CD8-positive, alpha-beta T cell (primary cell): ENCODE measurements at regions of chr16 and their contacts with region 1.

Region 1: DNA sequence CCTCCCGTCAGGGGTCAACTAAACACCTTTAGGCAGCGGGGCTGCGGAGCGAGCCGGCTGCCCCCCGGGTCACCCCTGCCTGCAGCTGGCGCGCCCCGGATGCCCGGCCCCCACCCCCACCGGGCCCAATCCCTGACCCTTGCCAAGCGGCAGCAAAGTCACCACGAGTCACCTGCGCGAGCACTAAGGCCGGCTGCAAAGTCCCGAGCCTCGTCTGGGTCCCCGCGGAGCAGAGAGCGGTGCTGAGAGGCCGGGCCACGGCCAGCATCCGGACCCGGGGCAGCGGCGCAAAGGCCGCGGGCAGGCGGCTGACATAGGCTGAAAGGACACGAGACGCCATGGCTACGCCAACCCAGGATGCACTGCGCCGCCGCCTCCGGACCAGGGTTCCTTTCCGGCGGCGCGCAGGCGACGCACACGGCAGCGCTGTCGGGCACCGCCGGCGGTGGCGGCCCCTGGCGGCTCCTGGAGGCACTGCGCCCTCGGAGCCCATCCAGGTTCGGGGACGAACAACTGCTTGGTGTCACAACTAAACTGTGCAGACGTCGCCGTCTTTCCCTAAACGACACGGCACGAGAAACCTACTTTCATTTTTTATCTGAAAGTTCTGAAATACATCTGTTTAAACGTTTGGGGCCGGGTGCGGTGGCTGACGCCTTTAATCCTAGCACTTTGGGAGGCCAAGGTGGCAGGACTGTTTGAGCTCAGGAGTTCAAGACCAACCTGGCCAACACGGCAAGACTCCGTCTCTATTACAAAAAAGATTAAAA is at the start of gene NDUFAB1:
- DNase-seq: peak; percentile 83 to 94 (median 90)
- ATAC-seq: peak; percentile 100
- H3K4me3 ChIP-seq: peak within 1 kb of the TSS; percentile 81 to 82
- H3K4me3 Mint-ChIP-seq: peak within 1 kb of the TSS; percentile 82
- H3K27ac ChIP-seq: peak within 1 kb of the TSS; percentile 67 to 77
- H3K27ac Mint-ChIP-seq: peak within 1 kb of the TSS; percentile 88
- H3K4me1 ChIP-seq: peaks cover 13% of the 10 kb centered on the region
- H3K4me1 Mint-ChIP-seq: peaks cover 41% of the 10 kb centered on the region
- H3K27me3 ChIP-seq: no peaks in the 10 kb centered on the region
- H3K27me3 Mint-ChIP-seq: no peaks in the 10 kb centered on the region
- CTCF ChIP-seq: peak; percentile 95
- total RNA-seq, gene NDUFAB1: 32.3 to 36.0 TPM

Region 2: GRCh38 chr16:23510164-23510914 is 85.8 kb before region 1 on chr16 and contains the start of gene GGA2:
- CTCF ChIA-PET with region 1: interaction called, 4 read pairs
- POLR2A ChIA-PET with region 1: no interaction called
- intact Hi-C with region 1: loop called (anchors 1 to 2 kb)
- DNase-seq: peak; percentile 56 to 89 (median 77)
- ATAC-seq: peak; percentile 81
- H3K4me3 ChIP-seq: peak within 1 kb of the TSS; percentile 63 to 73
- H3K4me3 Mint-ChIP-seq: peak within 1 kb of the TSS; percentile 92
- H3K27ac ChIP-seq: peak within 1 kb of the TSS; percentile 40 to 64
- H3K27ac Mint-ChIP-seq: peak within 1 kb of the TSS; percentile 88
- H3K4me1 ChIP-seq: peaks cover 42% of the 10 kb centered on the region
- H3K4me1 Mint-ChIP-seq: peaks cover 59% of the 10 kb centered on the region
- H3K27me3 ChIP-seq: no peaks in the 10 kb centered on the region
- H3K27me3 Mint-ChIP-seq: no peaks in the 10 kb centered on the region
- CTCF ChIP-seq: no peak
- total RNA-seq, gene GGA2: 220 to 239 TPM

Region 3: DNA sequence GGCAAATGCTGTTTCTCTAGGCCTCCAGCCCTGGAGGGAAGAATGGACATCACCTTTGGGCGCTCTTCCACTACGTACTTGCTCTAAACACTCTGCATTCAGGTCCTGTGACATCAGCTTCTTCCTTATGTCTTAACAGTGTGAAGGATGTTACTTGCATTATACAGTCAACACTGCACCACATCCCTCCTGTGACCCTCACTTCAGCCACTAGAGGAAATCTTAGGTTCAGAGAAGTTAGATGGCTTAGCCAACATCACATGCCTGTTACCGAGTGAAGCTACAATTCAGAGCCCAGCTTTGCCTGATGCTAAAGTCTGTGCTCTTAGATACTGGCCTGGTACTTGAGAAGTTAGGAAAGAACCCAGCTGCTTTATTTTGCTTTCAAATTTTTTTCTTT is 20.3 kb before region 1 on chr16:
- CTCF ChIA-PET with region 1: interaction called, 10 read pairs
- POLR2A ChIA-PET with region 1: no interaction called
- intact Hi-C with region 1: no loop called
- DNase-seq: no peak
- ATAC-seq: no peak
- H3K4me3 ChIP-seq: no peak overlapping the region
- H3K4me3 Mint-ChIP-seq: no peak overlapping the region
- H3K27ac ChIP-seq: no peak overlapping the region
- H3K27ac Mint-ChIP-seq: no peak overlapping the region
- H3K4me1 ChIP-seq: no peaks in the 10 kb centered on the region
- H3K4me1 Mint-ChIP-seq: no peaks in the 10 kb centered on the region
- H3K27me3 ChIP-seq: no peaks in the 10 kb centered on the region
- H3K27me3 Mint-ChIP-seq: no peaks in the 10 kb centered on the region
- CTCF ChIP-seq: no peak

Region 4: GRCh38 chr16:23640931-23641765 is 45.0 kb after region 1 on chr16 and contains the starts of genes DCTN5 and PALB2:
- CTCF ChIA-PET with region 1: no interaction called
- POLR2A ChIA-PET with region 1: interaction called, 3 read pairs
- intact Hi-C with region 1: loop called in 1 of 2 experiments (anchors 1 kb)
- DNase-seq: peak; percentile 59 to 92 (median 81)
- ATAC-seq: peak; percentile 92
- H3K4me3 ChIP-seq: peak within 1 kb of the TSS; percentile 84 to 99
- H3K4me3 Mint-ChIP-seq: peak within 1 kb of the TSS; percentile 98
- H3K27ac ChIP-seq: peak within 1 kb of the TSS; percentile 83 to 90
- H3K27ac Mint-ChIP-seq: peak within 1 kb of the TSS; percentile 97
- H3K4me1 ChIP-seq: peaks cover 22% of the 10 kb centered on the region
- H3K4me1 Mint-ChIP-seq: peaks cover 39% of the 10 kb centered on the region
- H3K27me3 ChIP-seq: no peaks in the 10 kb centered on the region
- H3K27me3 Mint-ChIP-seq: no peaks in the 10 kb centered on the region
- CTCF ChIP-seq: no peak
- total RNA-seq, gene DCTN5: 53.6 to 57.1 TPM
- total RNA-seq, gene PALB2: 5.3 to 5.6 TPM

Region 5: GRCh38 chr16:23651943-23652468 is 55.9 kb after region 1 on chr16:
- CTCF ChIA-PET with region 1: no interaction called
- POLR2A ChIA-PET with region 1: no interaction called
- intact Hi-C with region 1: no loop called
- DNase-seq: no peak
- ATAC-seq: no peak
- H3K4me3 ChIP-seq: no peak overlapping the region
- H3K4me3 Mint-ChIP-seq: no peak overlapping the region
- H3K27ac ChIP-seq: no peak overlapping the region
- H3K27ac Mint-ChIP-seq: no peak overlapping the region
- H3K4me1 ChIP-seq: no peaks in the 10 kb centered on the region
- H3K4me1 Mint-ChIP-seq: peaks cover 22% of the 10 kb centered on the region
- H3K27me3 ChIP-seq: no peaks in the 10 kb centered on the region
- H3K27me3 Mint-ChIP-seq: no peaks in the 10 kb centered on the region
- CTCF ChIP-seq: no peak

Region 6: DNA sequence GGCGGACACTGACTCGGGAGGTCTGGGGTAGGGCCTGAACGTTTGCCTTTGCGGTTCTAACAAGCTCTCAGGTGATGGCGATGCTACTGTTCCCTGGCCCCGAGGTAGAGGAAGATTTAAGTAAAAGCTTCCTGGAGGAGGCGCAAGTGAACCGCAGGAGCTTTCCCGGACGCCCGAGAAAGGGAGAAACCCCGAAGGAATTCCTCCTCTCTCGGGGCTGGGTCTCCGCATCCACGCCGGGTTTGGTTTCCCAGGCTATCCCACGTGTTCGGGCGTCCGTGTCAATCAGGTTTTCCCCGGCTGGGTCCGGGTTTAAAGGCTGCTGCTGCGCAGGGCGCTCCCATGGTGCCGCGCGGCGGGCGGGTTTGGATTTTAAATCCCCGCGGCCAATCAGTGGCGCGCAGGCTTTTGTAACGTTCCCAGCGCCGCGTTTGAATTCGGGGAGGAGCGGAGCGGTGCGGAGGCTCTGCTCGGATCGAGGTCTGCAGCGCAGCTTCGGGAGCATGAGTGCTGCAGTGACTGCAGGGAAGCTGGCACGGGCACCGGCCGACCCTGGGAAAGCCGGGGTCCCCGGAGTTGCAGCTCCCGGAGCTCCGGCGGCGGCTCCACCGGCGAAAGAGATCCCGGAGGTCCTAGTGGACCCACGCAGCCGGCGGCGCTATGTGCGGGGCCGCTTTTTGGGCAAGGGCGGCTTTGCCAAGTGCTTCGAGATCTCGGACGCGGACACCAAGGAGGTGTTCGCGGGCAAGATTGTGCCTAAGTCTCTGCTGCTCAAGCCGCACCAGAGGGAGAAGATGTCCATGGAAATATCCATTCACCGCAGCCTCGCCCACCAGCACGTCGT is 82.5 kb after region 1 on chr16 and contains the start of gene PLK1:
- CTCF ChIA-PET with region 1: no interaction called
- POLR2A ChIA-PET with region 1: no interaction called
- intact Hi-C with region 1: loop called in 1 of 2 experiments (anchors 1 kb)
- DNase-seq: peak; percentile 44 to 76 (median 68)
- ATAC-seq: peak; percentile 98
- H3K4me3 ChIP-seq: peak within 1 kb of the TSS; percentile 65 to 71
- H3K4me3 Mint-ChIP-seq: peak within 1 kb of the TSS; percentile 85
- H3K27ac ChIP-seq: no peak within 1 kb of the TSS
- H3K27ac Mint-ChIP-seq: no peak within 1 kb of the TSS
- H3K4me1 ChIP-seq: peaks cover 6% of the 10 kb centered on the region
- H3K4me1 Mint-ChIP-seq: peaks cover 17% of the 10 kb centered on the region
- H3K27me3 ChIP-seq: no peaks in the 10 kb centered on the region
- H3K27me3 Mint-ChIP-seq: no peaks in the 10 kb centered on the region
- CTCF ChIP-seq: no peak
- total RNA-seq, gene PLK1: 0.25 to 0.76 TPM